Tibial artery (tissue), 4 donors: ENCODE measurements at regions of chr12 and their contacts with region 1.

Region 1: DNA sequence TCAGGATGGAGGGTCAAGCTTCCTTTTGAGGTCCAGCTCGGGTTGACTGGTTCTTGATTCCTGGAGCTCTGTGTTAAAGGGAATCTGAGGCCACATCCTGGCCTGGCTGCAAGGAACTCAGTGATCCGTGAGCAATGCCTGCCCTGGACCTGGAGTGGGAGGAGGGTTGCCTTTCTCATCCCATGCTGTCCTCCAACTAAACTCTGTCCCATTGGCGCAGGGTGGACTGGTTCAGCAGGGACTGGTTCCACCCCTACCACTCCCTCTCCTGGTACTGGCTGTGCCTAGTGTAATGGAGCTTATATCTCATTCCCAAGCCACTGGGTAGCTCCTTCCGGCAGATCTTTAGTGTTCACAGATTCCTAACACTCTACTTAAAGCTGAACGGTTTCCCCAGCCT is 3.9 kb upstream of the CMKLR1 start:
- DNase-seq: peak in 1 of 2 donors; percentile 84
- H3K4me3 ChIP-seq: no peak overlapping the region
- H3K27ac ChIP-seq: peak overlapping the region; percentile 87 to 92
- H3K4me1 ChIP-seq: peaks cover 0 to 55% (median 36%) of the 10 kb centered on the region in 4 donors
- H3K27me3 ChIP-seq: no peaks in the 10 kb centered on the region
- CTCF ChIP-seq: no peak

Region 2: DNA sequence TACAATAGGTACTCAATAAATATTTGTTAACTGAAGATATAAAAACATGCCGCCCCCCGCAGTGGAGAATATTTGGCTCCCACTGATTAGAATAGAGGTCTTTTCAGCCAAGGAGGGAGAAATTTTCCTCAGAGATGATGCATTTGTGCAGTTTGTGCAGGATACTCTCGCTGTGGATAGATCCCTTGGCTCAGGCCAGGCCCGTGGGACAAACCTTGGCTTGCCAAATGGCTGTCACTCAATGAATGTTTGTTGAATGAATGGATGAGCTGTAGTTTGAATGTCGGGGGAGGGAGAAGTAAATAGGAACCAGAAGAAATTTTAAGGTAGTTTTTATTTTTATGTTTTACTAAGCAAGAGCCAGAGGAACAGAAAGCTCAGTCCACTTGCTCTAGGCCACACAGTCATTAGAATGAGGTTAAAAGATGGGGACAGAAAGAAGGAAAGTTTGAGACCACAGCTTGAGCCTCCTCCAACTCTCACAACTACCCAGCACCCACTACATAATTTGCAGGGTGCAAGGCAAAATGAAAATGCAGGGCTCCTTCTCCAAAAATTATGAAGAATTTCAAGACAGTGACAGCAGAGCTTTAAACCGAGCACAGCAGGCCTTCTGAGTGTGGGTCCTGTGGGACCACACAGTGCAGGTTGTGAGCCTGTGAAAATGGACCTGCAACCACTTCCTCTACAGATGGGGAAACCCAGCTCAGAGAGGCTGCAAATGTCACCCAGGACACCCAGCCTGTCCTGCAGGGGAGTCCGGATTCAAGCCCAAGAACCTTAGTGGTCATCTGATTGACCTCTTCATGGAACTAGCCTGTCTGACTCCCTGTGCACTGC is 162.5 kb before region 1 on chr12:
- intact Hi-C with region 1: no loop called
- DNase-seq: no peak
- H3K4me3 ChIP-seq: no peak overlapping the region
- H3K27ac ChIP-seq: no peak overlapping the region
- H3K4me1 ChIP-seq: no peaks in the 10 kb centered on the region
- H3K27me3 ChIP-seq: no peaks in the 10 kb centered on the region
- CTCF ChIP-seq: no peak

Region 3: DNA sequence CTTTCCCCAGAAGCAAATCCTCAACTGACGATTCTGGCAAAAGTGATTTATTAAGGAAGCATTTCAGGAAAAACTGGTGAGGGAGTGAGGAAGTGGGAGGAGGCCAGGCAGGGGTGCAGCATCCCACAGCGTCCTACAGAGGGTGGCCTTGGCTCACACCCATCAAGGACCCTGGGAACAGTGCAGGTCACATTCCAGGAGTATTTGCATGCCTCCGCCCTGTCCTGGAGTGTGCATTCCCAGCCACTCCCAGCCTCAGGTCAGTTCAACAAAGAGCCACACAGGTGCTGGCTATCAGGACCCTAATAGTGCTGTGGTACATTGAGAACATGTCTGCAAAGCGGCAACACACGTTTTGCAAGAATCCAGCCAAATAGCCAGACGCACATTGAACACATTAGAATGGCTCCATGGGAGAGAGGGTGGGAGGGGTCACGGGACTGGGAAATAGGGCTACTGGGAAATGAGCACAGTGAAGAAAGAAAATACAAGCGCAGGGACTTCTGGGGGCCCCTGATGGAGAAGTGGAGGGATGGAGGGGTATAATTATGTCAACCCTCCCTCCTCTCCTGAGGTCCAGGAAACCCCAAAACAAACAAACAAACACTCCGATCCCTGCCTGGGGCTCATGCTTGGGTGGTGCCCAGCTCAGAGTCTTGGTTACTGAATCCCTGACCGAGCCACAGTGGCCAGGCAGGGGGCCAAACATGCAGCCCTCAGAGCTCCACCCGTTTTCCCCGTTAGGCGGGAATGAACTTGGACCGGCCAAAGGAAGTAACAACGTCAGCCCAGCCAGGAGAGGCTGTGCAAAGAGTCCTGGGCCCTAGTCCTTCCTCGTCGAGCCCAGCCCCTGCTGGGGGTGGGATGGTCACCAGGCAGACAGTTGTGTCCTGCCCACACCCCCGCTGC is 40.3 kb before region 1 on chr12:
- intact Hi-C with region 1: loop called (anchors 5 kb)
- DNase-seq: peak; percentile 89 to 95
- H3K4me3 ChIP-seq: peak overlapping the region in 1 of 2 donors; percentile 8
- H3K27ac ChIP-seq: peak overlapping the region; percentile 83 to 90
- H3K4me1 ChIP-seq: peaks cover 0 to 64% (median 52%) of the 10 kb centered on the region in 4 donors
- H3K27me3 ChIP-seq: no peaks in the 10 kb centered on the region
- CTCF ChIP-seq: no peak